Calu3 (cell line): ENCODE measurements at regions of chr3 and their contacts with region 1.

Region 1: DNA sequence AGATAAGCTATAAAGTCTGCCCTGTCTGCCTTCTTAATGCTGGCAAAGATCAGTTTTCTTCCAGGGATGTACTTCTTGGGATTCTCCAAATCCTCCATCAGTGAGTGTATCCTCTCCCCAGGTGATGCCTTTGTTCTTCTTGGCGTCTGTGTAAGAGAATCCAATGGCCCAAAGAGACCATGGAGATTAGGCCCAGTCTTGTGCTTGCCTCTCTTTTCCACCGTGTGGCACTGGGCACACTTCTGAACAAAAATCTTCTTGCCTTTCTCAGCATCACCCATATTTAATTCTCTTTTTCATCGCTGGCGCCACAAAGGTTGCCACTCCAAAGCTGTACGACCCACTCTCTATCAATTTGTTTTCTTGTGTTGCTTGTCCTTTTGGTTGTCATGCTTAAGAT is 32.2 kb upstream of the TAMM41 start:
- DNase-seq: no peak
- H3K4me3 Mint-ChIP-seq: no peak overlapping the region
- H3K27ac Mint-ChIP-seq: no peak overlapping the region
- H3K4me1 Mint-ChIP-seq: no peaks in the 10 kb centered on the region
- H3K27me3 Mint-ChIP-seq: peaks cover 42% of the 10 kb centered on the region
- CTCF ChIP-seq: no peak

Region 2: GRCh38 chr3:11944052-11944673 is 65.3 kb after region 1 on chr3:
- CTCF ChIA-PET with region 1: interaction called, 11 read pairs
- intact Hi-C with region 1: no loop called
- DNase-seq: peak; percentile 28
- H3K4me3 Mint-ChIP-seq: no peak overlapping the region
- H3K27ac Mint-ChIP-seq: no peak overlapping the region
- H3K4me1 Mint-ChIP-seq: no peaks in the 10 kb centered on the region
- H3K27me3 Mint-ChIP-seq: peaks cover 31% of the 10 kb centered on the region
- CTCF ChIP-seq: peak; percentile 51

Region 3: GRCh38 chr3:12054256-12054655 is 175.4 kb after region 1 on chr3:
- CTCF ChIA-PET with region 1: no interaction called
- intact Hi-C with region 1: loop called (anchors 5 kb)
- DNase-seq: no peak
- H3K4me3 Mint-ChIP-seq: no peak overlapping the region
- H3K27ac Mint-ChIP-seq: no peak overlapping the region
- H3K4me1 Mint-ChIP-seq: no peaks in the 10 kb centered on the region
- H3K27me3 Mint-ChIP-seq: peaks cover 72% of the 10 kb centered on the region
- CTCF ChIP-seq: no peak